ENCODE measurements at regions of chr1 and their contacts with region 1.

Region 1: GRCh38 chr1:3319874-3320245 is 134.6 kb upstream of the ARHGEF16 start:
- DNase-seq: peak; percentile 89
- ATAC-seq: peak; percentile 63
- H3K4me3 ChIP-seq: peak overlapping the region in 2 of 3 experiments; percentile 6 to 74; a peak in 2 of 6 replicates
- H3K27ac ChIP-seq: peak overlapping the region; percentile 81
- H3K4me1 ChIP-seq: peaks cover 79% of the 10 kb centered on the region
- H3K27me3 ChIP-seq: no peaks in the 10 kb centered on the region; a peak in 1 of 5 replicates
- CTCF ChIP-seq: peak; percentile 87
- EP300 ChIP-seq: no peak
- POLR2A ChIP-seq: no peak
- RAD21 ChIP-seq: peak; percentile 74

Region 2: DNA sequence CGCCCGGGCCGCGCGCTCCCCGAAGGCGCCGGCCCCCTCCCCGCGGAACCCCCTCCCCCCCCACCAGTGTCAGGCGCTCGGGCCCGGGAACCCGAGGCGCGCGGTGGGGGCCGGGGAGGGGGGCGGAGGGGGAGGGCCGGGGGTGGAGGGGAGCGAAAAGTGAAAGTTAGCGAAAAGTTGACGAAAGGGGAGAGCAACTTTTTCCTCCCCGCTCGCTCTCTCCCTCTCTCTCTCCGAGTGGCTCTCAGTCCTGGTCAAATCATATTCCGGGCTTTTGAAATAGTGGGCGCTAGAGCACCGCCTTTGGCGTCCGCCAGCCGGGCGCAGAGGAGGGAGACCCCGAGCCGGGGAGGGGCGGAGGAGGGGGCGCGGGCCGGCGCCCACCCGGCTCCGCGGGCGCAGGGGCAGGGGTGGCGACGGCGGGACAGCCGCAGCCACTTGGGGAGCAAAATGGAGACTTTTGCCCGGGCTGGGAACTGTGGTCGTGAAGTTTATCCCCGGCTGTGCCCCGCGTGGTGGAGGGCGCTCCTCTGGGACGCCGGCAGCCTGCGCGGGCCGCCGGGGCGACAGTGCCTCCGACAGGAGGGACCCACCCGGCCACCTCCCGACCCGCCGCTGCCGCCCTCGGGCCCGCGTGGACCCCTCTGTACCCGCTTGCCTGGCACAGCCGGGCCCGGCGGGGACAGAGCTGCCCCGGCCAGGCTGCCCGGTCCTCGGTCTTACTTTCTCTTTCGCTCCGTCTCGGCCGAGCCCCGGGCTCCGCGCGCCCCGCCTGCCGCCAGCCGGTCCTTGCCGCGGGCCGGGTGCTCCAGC is 250.2 kb before region 1 on chr1:
- CTCF ChIA-PET with region 1: interaction called, 4 read pairs
- POLR2A ChIA-PET with region 1: interaction called, 7 read pairs
- in situ Hi-C with region 1: no loop called
- intact Hi-C with region 1: loop called (anchors 1 kb)
- DNase-seq: peak; percentile 64
- ATAC-seq: peak; percentile 47
- H3K4me3 ChIP-seq: peak overlapping the region; percentile 60 to 77 (median 74)
- H3K27ac ChIP-seq: peak overlapping the region; percentile 56
- H3K4me1 ChIP-seq: peaks cover 35% of the 10 kb centered on the region
- H3K27me3 ChIP-seq: peaks cover 2 to 23% of the 10 kb centered on the region in 2 experiments
- CTCF ChIP-seq: peak; percentile 77
- EP300 ChIP-seq: no peak
- POLR2A ChIP-seq: no peak
- RAD21 ChIP-seq: peak; percentile 55

Region 3: DNA sequence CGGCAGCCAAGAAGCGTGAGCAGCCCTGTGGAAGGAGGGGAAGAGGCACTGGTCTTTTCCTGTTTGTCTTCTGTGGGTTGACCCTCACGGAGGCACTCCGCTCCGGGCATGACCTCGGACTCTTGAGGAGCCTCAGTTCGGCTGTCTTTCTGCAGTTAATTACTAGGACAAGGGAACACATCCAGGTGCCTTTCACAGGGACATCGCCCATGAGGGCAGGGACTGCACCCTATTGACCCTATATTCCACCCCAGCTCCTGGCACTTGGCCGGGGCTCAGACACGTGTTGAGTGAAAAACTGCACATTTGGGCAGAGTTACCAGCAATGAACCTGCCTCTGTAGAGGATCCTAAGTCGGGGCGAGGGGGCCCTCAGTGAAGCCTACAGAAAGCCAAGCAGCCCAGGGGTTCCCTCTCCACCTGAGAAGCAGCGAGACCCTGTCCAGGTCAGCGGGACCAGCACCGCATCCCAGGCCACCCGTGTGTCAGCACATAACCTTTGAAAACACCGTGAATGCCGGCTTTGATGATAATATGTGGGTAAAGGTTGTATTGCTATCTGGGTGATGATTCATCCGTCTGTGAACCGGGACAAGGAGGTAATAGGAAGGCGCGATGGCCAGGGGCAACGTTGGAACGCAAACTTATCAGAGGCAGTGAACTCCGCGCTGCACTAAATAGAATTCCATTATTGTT is 26.8 kb before region 1 on chr1:
- CTCF ChIA-PET with region 1: no interaction called
- POLR2A ChIA-PET with region 1: interaction called, 29 read pairs
- in situ Hi-C with region 1: no loop called
- intact Hi-C with region 1: loop called (anchors 1 kb)
- DNase-seq: peak; percentile 92
- ATAC-seq: peak; percentile 75
- H3K4me3 ChIP-seq: peak overlapping the region; percentile 24 to 63 (median 37); a peak in 5 of 6 replicates
- H3K27ac ChIP-seq: peak overlapping the region; percentile 68
- H3K4me1 ChIP-seq: peaks cover 80% of the 10 kb centered on the region
- H3K27me3 ChIP-seq: no peaks in the 10 kb centered on the region
- CTCF ChIP-seq: no peak
- EP300 ChIP-seq: peak in 1 of 2 experiments; percentile 89; a peak in 2 of 4 replicates
- POLR2A ChIP-seq: peak in 1 of 2 experiments; percentile 10; a peak in 1 of 4 replicates
- RAD21 ChIP-seq: no peak

Region 4: DNA sequence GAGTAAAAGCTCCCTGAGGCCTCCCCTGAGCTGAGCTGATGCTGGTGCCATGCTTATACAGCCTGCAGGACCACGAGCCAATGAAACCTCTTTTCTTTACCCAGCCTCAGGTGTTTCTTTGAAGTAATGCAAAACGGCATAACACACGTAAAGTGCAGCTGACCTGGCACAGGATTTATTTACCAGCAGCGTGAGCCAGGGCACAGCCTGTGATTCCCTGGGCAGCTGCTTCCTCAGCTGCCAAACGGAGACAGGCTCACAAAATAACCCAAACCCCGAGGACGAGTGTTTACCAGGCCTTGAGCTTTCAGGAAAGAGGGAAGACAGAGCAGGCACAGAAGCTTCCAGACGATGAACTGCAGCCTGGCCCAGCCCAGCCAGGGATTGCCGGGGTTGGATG is 14.0 kb after region 1 on chr1:
- CTCF ChIA-PET with region 1: no interaction called
- POLR2A ChIA-PET with region 1: interaction called, 48 read pairs
- in situ Hi-C with region 1: no loop called
- intact Hi-C with region 1: no loop called
- DNase-seq: no peak
- ATAC-seq: no peak
- H3K4me3 ChIP-seq: peak overlapping the region in 2 of 3 experiments; percentile 6 to 62; a peak in 3 of 6 replicates
- H3K27ac ChIP-seq: peak overlapping the region; percentile 96
- H3K4me1 ChIP-seq: peaks cover 100% of the 10 kb centered on the region
- H3K27me3 ChIP-seq: no peaks in the 10 kb centered on the region
- CTCF ChIP-seq: no peak
- EP300 ChIP-seq: no peak
- POLR2A ChIP-seq: no peak
- RAD21 ChIP-seq: no peak

Region 5: DNA sequence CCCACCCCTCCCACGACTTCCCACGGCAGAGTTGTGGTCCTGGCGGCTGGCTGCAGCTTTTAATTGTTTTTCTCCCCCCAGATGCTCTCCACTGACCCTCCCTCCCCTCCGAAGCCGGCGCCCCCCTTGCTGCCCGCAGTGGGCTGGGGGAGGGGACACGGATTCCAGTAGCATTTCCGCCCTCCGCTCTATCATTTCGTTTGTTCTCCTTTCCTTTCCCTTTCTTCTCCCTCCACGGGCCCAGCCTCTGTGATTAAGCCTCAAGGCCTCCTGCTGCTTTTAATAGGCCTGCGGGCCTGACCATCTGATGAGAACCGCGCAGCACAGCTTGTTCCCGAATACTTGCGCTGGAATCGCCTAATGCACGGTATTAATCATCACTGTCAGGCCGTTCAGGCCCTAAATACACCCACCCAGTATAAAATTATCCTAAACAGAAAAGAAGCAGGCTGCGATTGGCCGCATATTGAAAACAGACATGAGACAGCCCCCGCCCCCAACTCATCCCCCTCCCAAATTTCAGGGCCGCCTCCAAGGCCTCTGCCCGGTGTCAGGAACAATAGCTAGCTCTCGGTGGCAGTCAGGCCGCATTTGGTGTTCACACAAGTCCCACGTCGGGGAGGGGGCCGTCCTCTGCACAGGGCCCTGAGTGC is 32.6 kb after region 1 on chr1:
- CTCF ChIA-PET with region 1: interaction called, 8 read pairs
- POLR2A ChIA-PET with region 1: interaction called, 54 read pairs
- in situ Hi-C with region 1: no loop called
- intact Hi-C with region 1: loop called (anchors 2 kb)
- DNase-seq: no peak
- ATAC-seq: no peak
- H3K4me3 ChIP-seq: no peak overlapping the region
- H3K27ac ChIP-seq: no peak overlapping the region
- H3K4me1 ChIP-seq: peaks cover 92% of the 10 kb centered on the region
- H3K27me3 ChIP-seq: no peaks in the 10 kb centered on the region
- CTCF ChIP-seq: no peak
- EP300 ChIP-seq: no peak
- POLR2A ChIP-seq: no peak
- RAD21 ChIP-seq: no peak

Region 6: GRCh38 chr1:3369446-3370076 is 49.7 kb after region 1 on chr1:
- CTCF ChIA-PET with region 1: no interaction called
- POLR2A ChIA-PET with region 1: no interaction called
- in situ Hi-C with region 1: no loop called
- intact Hi-C with region 1: no loop called
- DNase-seq: no peak
- ATAC-seq: no peak
- H3K4me3 ChIP-seq: no peak overlapping the region
- H3K27ac ChIP-seq: no peak overlapping the region
- H3K4me1 ChIP-seq: peaks cover 16% of the 10 kb centered on the region
- H3K27me3 ChIP-seq: peaks cover 2 to 24% of the 10 kb centered on the region in 2 experiments; a peak in 4 of 5 replicates
- CTCF ChIP-seq: no peak
- EP300 ChIP-seq: no peak
- POLR2A ChIP-seq: no peak
- RAD21 ChIP-seq: no peak